ENCODE measurements at regions of chr11 and their contacts with region 1.

Region 1: DNA sequence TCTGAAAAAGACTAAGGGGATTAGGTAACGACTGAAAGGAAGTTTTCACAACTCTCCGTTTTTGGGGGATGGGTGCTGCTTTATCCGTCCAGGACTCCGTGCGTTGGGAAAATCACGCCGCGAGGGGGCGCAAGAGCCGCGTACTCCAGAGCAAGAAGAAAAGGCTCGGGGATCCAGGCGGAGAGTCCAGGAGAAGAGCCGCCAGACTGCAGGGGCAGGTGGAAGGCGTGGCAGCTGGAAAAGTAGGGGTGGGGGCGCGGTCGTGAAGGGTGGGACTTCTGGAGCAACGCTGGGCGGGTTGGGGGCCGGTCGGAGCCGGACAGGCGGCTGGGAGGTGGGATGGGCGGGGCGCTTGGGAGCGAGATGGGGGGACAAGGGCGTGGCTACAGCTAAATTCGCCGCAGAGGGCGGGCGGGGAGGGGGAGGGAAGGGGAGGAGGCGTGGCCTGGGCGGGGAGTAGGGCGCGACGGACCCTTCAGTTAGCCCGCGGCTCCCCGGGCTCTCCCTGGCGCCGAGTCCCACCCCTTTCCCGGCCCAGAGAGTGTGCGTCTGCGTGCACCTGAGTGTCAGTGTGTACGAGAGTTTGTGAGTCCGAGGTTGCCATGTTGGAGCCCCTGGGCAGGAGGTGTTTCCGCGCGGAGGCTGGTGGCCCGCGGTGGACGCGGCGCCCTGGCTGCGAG is 613 bp upstream of the ARHGEF17 start:
- DNase-seq: peak; percentile 95 to 99
- H3K4me3 ChIP-seq: peak overlapping the region; percentile 57 to 88 (median 84)
- H3K27ac ChIP-seq: 0 out of 2 replicates have a peak overlapping the region, but pooled peaks have one; percentile 39
- H3K4me1 ChIP-seq: peaks cover 3 to 20% (median 7%) of the 10 kb centered on the region in 4 experiments; a peak in 6 of 7 replicates
- H3K27me3 ChIP-seq: peaks cover 0 to 39% (median 27%) of the 10 kb centered on the region in 4 experiments; a peak in 6 of 7 replicates
- CTCF ChIP-seq: peak in 2 of 3 experiments; percentile 78 to 89; a peak in 3 of 4 replicates
- EP300 ChIP-seq: 0 out of 3 replicates have a peak, but pooled peaks of 1 of the 2 experiments have one; percentile 47
- POLR2A ChIP-seq: no peak
- RAD21 ChIP-seq: peak; percentile 80 to 88

Region 2: GRCh38 chr11:73221466-73221865 is 86.0 kb before region 1 on chr11:
- CTCF ChIA-PET with region 1: no interaction called
- POLR2A ChIA-PET with region 1: no interaction called
- DNase-seq: no peak
- H3K4me3 ChIP-seq: no peak overlapping the region
- H3K27ac ChIP-seq: no peak overlapping the region
- H3K4me1 ChIP-seq: peaks cover 0 to 5% (median 2%) of the 10 kb centered on the region in 4 experiments; a peak in 5 of 7 replicates
- H3K27me3 ChIP-seq: peaks cover 2 to 35% (median 31%) of the 10 kb centered on the region in 4 experiments
- CTCF ChIP-seq: no peak
- EP300 ChIP-seq: no peak
- POLR2A ChIP-seq: no peak
- RAD21 ChIP-seq: no peak

Region 3: DNA sequence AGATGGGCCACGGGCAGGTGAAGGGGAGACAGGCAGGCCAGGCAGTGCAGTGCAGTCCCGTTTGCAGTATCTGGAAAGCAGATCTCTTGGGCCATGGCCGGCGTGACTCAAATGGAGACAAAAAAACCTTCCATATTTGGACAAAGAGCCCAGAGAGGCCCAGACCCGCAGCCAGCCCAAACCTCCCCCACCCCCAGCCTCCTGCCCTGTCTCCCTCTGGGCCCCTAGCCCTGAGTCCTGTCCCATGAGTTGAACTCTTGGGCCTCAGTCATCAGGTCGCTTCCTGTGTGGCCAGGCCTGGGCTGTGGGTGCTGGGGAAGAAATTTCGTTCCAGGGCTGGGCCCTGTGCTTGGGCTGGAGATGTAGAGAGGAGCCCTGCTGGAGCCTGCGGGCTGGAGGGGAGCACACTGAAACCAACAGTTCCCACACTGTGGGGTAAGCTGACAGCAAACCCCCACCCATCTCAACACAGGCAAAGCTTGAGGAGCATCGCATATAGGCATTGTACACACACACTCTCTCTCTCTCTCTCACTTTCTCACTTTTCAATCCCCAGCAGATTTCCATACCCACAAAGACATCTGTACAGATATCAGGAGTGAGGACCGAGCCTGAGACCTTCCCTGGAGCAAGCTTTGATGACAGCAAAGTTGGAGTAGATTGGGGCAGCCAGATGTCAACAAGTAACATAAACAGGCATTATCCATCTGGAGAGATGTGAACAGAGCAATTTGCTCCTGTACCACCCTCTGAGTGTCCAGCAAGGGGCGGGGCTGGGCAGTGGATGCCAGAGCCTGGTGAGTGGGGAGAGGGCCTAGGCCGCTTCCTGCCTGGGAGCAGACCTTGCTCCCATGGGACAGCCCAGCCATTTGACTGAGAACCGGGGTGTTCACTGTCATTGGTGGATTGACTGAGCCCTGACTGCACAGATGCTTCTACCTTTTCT is 17.8 kb after region 1 on chr11:
- CTCF ChIA-PET with region 1: interaction called, 258 read pairs
- POLR2A ChIA-PET with region 1: interaction called, 91 read pairs
- DNase-seq: no peak
- H3K4me3 ChIP-seq: no peak overlapping the region
- H3K27ac ChIP-seq: no peak overlapping the region
- H3K4me1 ChIP-seq: peaks cover 15 to 28% (median 20%) of the 10 kb centered on the region in 4 experiments
- H3K27me3 ChIP-seq: peaks cover 0 to 16% (median 8%) of the 10 kb centered on the region in 4 experiments; a peak in 3 of 7 replicates
- CTCF ChIP-seq: no peak
- EP300 ChIP-seq: no peak
- POLR2A ChIP-seq: no peak
- RAD21 ChIP-seq: no peak

Region 4: GRCh38 chr11:73335204-73335923 is 27.9 kb after region 1 on chr11:
- CTCF ChIA-PET with region 1: interaction called, 383 read pairs
- POLR2A ChIA-PET with region 1: interaction called, 91 read pairs
- DNase-seq: peak in 1 of 2 experiments; percentile 98
- H3K4me3 ChIP-seq: no peak overlapping the region
- H3K27ac ChIP-seq: no peak overlapping the region
- H3K4me1 ChIP-seq: peaks cover 10 to 32% (median 26%) of the 10 kb centered on the region in 4 experiments
- H3K27me3 ChIP-seq: peaks cover 28 to 64% (median 52%) of the 10 kb centered on the region in 4 experiments
- CTCF ChIP-seq: peak; percentile 93 to 95 (median 94)
- EP300 ChIP-seq: no peak
- POLR2A ChIP-seq: no peak
- RAD21 ChIP-seq: peak; percentile 93 to 95

Region 5: DNA sequence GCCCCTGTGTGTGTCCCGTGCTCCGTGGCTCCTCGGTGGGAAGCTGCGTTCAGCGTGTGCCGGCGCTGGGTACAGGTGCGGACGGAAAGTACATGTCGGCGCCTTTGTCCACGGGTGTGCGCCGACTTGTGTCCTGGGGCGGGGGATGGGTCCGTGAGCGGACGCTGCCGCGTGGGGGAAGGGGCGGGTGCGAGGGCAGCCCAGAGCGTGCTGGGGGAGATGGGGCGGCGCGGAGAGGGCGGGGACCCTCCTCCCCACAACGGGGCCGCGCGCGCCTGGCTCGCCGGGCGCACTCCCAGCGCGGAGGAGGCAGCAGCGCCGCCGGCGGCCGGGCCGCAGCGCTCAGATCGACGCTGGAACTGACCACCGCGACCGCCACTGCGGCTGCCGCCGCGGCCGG is 35.2 kb after region 1 on chr11:
- CTCF ChIA-PET with region 1: interaction called, 383 read pairs
- POLR2A ChIA-PET with region 1: interaction called, 29 read pairs
- DNase-seq: no peak
- H3K4me3 ChIP-seq: peak overlapping the region; percentile 29 to 55 (median 34); a peak in 7 of 8 replicates
- H3K27ac ChIP-seq: no peak overlapping the region
- H3K4me1 ChIP-seq: peaks cover 0 to 11% (median 9%) of the 10 kb centered on the region in 4 experiments; a peak in 6 of 7 replicates
- H3K27me3 ChIP-seq: peaks cover 7 to 44% (median 30%) of the 10 kb centered on the region in 4 experiments; a peak in 6 of 7 replicates
- CTCF ChIP-seq: peak in 2 of 3 experiments; percentile 17 to 37; a peak in 3 of 4 replicates
- EP300 ChIP-seq: no peak
- POLR2A ChIP-seq: no peak
- RAD21 ChIP-seq: no peak

Region 6: GRCh38 chr11:73350908-73351636 is 43.6 kb after region 1 on chr11:
- CTCF ChIA-PET with region 1: interaction called, 111 read pairs
- POLR2A ChIA-PET with region 1: interaction called, 4 read pairs
- DNase-seq: peak in 1 of 2 experiments; percentile 63
- H3K4me3 ChIP-seq: no peak overlapping the region
- H3K27ac ChIP-seq: no peak overlapping the region
- H3K4me1 ChIP-seq: no peaks in the 10 kb centered on the region; a peak in 2 of 7 replicates
- H3K27me3 ChIP-seq: no peaks in the 10 kb centered on the region
- CTCF ChIP-seq: peak; percentile 82 to 88 (median 85)
- EP300 ChIP-seq: no peak
- POLR2A ChIP-seq: no peak
- RAD21 ChIP-seq: peak; percentile 65 to 74

Region 7: GRCh38 chr11:73360336-73361013 is 53.0 kb after region 1 on chr11:
- CTCF ChIA-PET with region 1: interaction called, 111 read pairs
- POLR2A ChIA-PET with region 1: interaction called, 3 read pairs
- DNase-seq: peak in 1 of 2 experiments; percentile 83
- H3K4me3 ChIP-seq: no peak overlapping the region
- H3K27ac ChIP-seq: no peak overlapping the region
- H3K4me1 ChIP-seq: peaks cover 0 to 3% (median under 1%) of the 10 kb centered on the region in 4 experiments; a peak in 3 of 7 replicates
- H3K27me3 ChIP-seq: peaks cover 0 to 4% (median 2%) of the 10 kb centered on the region in 4 experiments; a peak in 4 of 7 replicates
- CTCF ChIP-seq: peak; percentile 79 to 86 (median 84)
- EP300 ChIP-seq: no peak
- POLR2A ChIP-seq: no peak
- RAD21 ChIP-seq: peak; percentile 70 to 80

Region 8: GRCh38 chr11:73376160-73376802 is 68.8 kb after region 1 on chr11 and contains the start of gene RELT:
- CTCF ChIA-PET with region 1: interaction called, 11 read pairs
- POLR2A ChIA-PET with region 1: interaction called, 3 read pairs
- DNase-seq: peak; percentile 71 to 100
- H3K4me3 ChIP-seq: peak within 1 kb of the TSS; percentile 48 to 88 (median 72)
- H3K27ac ChIP-seq: no peak within 1 kb of the TSS
- H3K4me1 ChIP-seq: peaks cover 3 to 13% (median 8%) of the 10 kb centered on the region in 4 experiments
- H3K27me3 ChIP-seq: peaks cover 0 to 15% (median 9%) of the 10 kb centered on the region in 4 experiments; a peak in 4 of 7 replicates
- CTCF ChIP-seq: peak in 2 of 3 experiments; percentile 87 to 96; a peak in 3 of 4 replicates
- EP300 ChIP-seq: no peak; a peak in 1 of 3 replicates
- POLR2A ChIP-seq: peak in 1 of 2 experiments; percentile 93; a peak in 2 of 3 replicates
- RAD21 ChIP-seq: peak; percentile 49 to 56
- total RNA-seq, gene RELT: 5.3 and 5.7 TPM in 2 replicates

Measured in H1 (cell line).